ENCODE measurements at regions of chr12 and their contacts with region 1.

Region 1: GRCh38 chr12:13941258-13942249 is 39.8 kb downstream of the GRIN2B start:
- DNase-seq: peak; percentile 90
- H3K4me3 ChIP-seq: no peak overlapping the region
- H3K4me3 Mint-ChIP-seq: peak overlapping the region; percentile 23
- H3K27ac Mint-ChIP-seq: peak overlapping the region; percentile 23
- H3K4me1 ChIP-seq: peaks cover 32% of the 10 kb centered on the region
- H3K4me1 Mint-ChIP-seq: peaks cover 24% of the 10 kb centered on the region
- H3K27me3 ChIP-seq: no peaks in the 10 kb centered on the region
- H3K27me3 Mint-ChIP-seq: no peaks in the 10 kb centered on the region
- CTCF ChIP-seq: peak; percentile 65 to 91

Region 2: DNA sequence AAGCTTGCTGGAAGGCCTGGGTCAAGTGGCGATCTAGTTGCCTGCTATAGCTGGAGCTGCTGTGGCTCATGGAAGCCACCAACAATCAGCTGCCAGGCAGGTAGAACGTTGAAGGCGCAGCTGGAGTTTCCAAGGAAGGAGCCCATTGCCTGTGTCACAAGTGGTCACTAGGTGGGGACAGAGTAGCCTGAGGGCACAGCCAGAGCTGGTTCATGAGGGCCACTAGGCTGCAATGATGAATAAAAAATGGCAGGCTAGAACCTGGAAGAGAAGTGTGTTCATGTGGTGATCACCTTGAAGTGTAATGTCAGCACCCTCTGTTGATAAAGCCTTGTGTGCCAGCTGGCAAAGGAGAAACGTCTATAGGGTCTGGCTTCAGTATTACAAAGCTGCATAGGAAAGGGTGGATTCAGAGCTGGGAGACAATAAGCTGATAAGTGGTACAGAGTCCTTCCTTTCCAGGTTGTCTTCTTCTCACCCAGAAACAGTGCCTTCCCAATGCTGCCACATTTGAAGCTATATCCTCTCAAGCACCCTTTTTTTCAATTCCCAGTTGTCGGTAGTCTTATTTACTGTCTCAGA is 579.2 kb before region 1 on chr12:
- CTCF ChIA-PET with region 1: interaction called, 6 read pairs
- POLR2A ChIA-PET with region 1: no interaction called
- intact Hi-C with region 1: loop called (anchors 5 kb)
- DNase-seq: peak; percentile 85 to 88
- H3K4me3 ChIP-seq: no peak overlapping the region
- H3K4me3 Mint-ChIP-seq: no peak overlapping the region
- H3K27ac Mint-ChIP-seq: no peak overlapping the region
- H3K4me1 ChIP-seq: no peaks in the 10 kb centered on the region
- H3K4me1 Mint-ChIP-seq: no peaks in the 10 kb centered on the region
- H3K27me3 ChIP-seq: no peaks in the 10 kb centered on the region
- H3K27me3 Mint-ChIP-seq: peaks cover 20% of the 10 kb centered on the region
- CTCF ChIP-seq: peak; percentile 93 to 96

Region 3: DNA sequence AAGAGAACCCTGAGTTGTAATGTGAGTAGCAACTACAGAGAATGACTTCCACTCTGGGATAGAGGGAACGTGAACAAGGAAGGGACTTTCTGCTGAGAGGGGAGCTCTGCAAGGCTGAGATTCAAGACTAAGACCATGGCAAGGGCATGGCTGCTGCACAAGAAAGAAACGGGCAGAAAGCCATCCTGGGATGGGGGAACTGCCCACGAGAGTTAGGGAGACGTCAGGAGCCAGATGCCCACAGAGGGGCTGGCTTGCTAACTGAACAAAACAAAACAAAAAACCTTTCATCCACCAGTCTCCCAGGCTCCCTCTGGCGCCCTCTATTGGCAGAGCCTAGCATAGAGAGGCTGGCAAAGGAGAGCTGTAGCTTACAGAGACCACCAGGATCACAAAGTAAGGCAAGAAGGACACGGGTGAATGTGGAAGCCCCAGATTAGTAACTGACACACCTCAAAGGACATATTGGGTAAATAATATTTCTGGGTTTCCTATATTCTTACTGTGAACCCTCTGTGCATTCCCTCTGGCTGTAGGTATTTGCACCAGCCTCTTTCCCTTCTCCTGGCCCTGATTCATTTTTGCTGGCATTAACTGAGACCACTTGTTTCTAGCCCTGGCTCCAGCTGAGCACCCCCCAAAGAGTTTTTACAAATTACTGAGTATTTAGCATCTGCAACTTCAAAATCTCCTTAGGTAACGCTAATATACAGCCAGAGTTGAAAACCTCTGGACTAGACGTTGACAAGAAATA is 406.7 kb before region 1 on chr12:
- CTCF ChIA-PET with region 1: interaction called, 3 read pairs
- POLR2A ChIA-PET with region 1: no interaction called
- intact Hi-C with region 1: loop called (anchors 10 kb)
- DNase-seq: peak; percentile 82 to 88
- H3K4me3 ChIP-seq: no peak overlapping the region
- H3K4me3 Mint-ChIP-seq: no peak overlapping the region
- H3K27ac Mint-ChIP-seq: no peak overlapping the region
- H3K4me1 ChIP-seq: no peaks in the 10 kb centered on the region; the same call in 1 of the 2 replicates
- H3K4me1 Mint-ChIP-seq: no peaks in the 10 kb centered on the region
- H3K27me3 ChIP-seq: no peaks in the 10 kb centered on the region
- H3K27me3 Mint-ChIP-seq: peaks cover under 1% of the 10 kb centered on the region
- CTCF ChIP-seq: peak; percentile 96

Region 4: GRCh38 chr12:13784504-13784903 is 157.1 kb before region 1 on chr12:
- CTCF ChIA-PET with region 1: no interaction called
- POLR2A ChIA-PET with region 1: no interaction called
- intact Hi-C with region 1: loop called (anchors 5 kb)
- DNase-seq: no peak
- H3K4me3 ChIP-seq: no peak overlapping the region
- H3K4me3 Mint-ChIP-seq: no peak overlapping the region
- H3K27ac Mint-ChIP-seq: peak overlapping the region; percentile 43
- H3K4me1 ChIP-seq: peaks cover 31% of the 10 kb centered on the region
- H3K4me1 Mint-ChIP-seq: peaks cover 43% of the 10 kb centered on the region
- H3K27me3 ChIP-seq: no peaks in the 10 kb centered on the region
- H3K27me3 Mint-ChIP-seq: no peaks in the 10 kb centered on the region
- CTCF ChIP-seq: no peak

Region 5: GRCh38 chr12:13864081-13864673 is 77.4 kb before region 1 on chr12:
- CTCF ChIA-PET with region 1: interaction called, 44 read pairs
- POLR2A ChIA-PET with region 1: no interaction called
- intact Hi-C with region 1: loop called (anchors 1 kb)
- DNase-seq: peak; percentile 84 to 87
- H3K4me3 ChIP-seq: no peak overlapping the region
- H3K4me3 Mint-ChIP-seq: no peak overlapping the region
- H3K27ac Mint-ChIP-seq: no peak overlapping the region
- H3K4me1 ChIP-seq: peaks cover 23% of the 10 kb centered on the region
- H3K4me1 Mint-ChIP-seq: peaks cover 35% of the 10 kb centered on the region
- H3K27me3 ChIP-seq: no peaks in the 10 kb centered on the region
- H3K27me3 Mint-ChIP-seq: no peaks in the 10 kb centered on the region
- CTCF ChIP-seq: peak; percentile 98 to 99

Region 6: GRCh38 chr12:13875744-13876143 is 65.8 kb before region 1 on chr12:
- CTCF ChIA-PET with region 1: no interaction called
- POLR2A ChIA-PET with region 1: no interaction called
- intact Hi-C with region 1: no loop called
- DNase-seq: no peak
- H3K4me3 ChIP-seq: no peak overlapping the region
- H3K4me3 Mint-ChIP-seq: no peak overlapping the region
- H3K27ac Mint-ChIP-seq: no peak overlapping the region
- H3K4me1 ChIP-seq: no peaks in the 10 kb centered on the region
- H3K4me1 Mint-ChIP-seq: peaks cover 2% of the 10 kb centered on the region
- H3K27me3 ChIP-seq: no peaks in the 10 kb centered on the region
- H3K27me3 Mint-ChIP-seq: no peaks in the 10 kb centered on the region
- CTCF ChIP-seq: no peak

Region 7: GRCh38 chr12:13913371-13913770 is 28.2 kb before region 1 on chr12:
- CTCF ChIA-PET with region 1: no interaction called
- POLR2A ChIA-PET with region 1: no interaction called
- intact Hi-C with region 1: no loop called
- DNase-seq: no peak
- H3K4me3 ChIP-seq: no peak overlapping the region
- H3K4me3 Mint-ChIP-seq: no peak overlapping the region
- H3K27ac Mint-ChIP-seq: no peak overlapping the region
- H3K4me1 ChIP-seq: peaks cover 20% of the 10 kb centered on the region
- H3K4me1 Mint-ChIP-seq: peaks cover 42% of the 10 kb centered on the region
- H3K27me3 ChIP-seq: no peaks in the 10 kb centered on the region
- H3K27me3 Mint-ChIP-seq: no peaks in the 10 kb centered on the region
- CTCF ChIP-seq: no peak

Region 8: GRCh38 chr12:13962699-13963098 is 21.1 kb after region 1 on chr12:
- CTCF ChIA-PET with region 1: no interaction called
- POLR2A ChIA-PET with region 1: no interaction called
- intact Hi-C with region 1: loop called (anchors 1 kb)
- DNase-seq: peak; percentile 59 to 65
- H3K4me3 ChIP-seq: no peak overlapping the region
- H3K4me3 Mint-ChIP-seq: no peak overlapping the region
- H3K27ac Mint-ChIP-seq: no peak overlapping the region
- H3K4me1 ChIP-seq: no peaks in the 10 kb centered on the region
- H3K4me1 Mint-ChIP-seq: peaks cover 19% of the 10 kb centered on the region
- H3K27me3 ChIP-seq: no peaks in the 10 kb centered on the region
- H3K27me3 Mint-ChIP-seq: no peaks in the 10 kb centered on the region
- CTCF ChIP-seq: peak; percentile 70 to 85

Region 9: DNA sequence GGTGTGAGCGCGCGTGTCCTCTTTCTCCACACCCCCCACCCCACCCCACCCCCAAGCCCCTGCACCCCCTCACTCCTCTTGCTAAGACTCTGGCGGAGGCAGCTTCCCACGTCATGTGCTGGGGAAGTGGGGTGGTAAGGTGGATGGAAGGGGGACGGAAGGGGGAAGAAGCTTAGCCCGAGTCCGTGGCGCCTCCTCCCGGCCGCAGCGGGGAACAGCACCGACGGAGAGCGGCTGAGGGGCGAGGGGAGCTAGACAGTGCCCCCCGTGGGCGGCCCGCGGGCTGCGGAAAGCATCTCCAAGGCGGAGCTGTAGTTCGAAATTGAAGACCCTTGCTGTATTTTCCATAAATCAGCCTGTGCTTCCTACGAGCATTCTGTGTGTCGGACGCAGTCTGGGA is 40.4 kb after region 1 on chr12:
- CTCF ChIA-PET with region 1: interaction called, 26 read pairs
- POLR2A ChIA-PET with region 1: no interaction called
- intact Hi-C with region 1: loop called (anchors 1 kb)
- DNase-seq: peak; percentile 79 to 92
- H3K4me3 ChIP-seq: peak overlapping the region; percentile 91
- H3K4me3 Mint-ChIP-seq: peak overlapping the region; percentile 98
- H3K27ac Mint-ChIP-seq: no peak overlapping the region
- H3K4me1 ChIP-seq: no peaks in the 10 kb centered on the region
- H3K4me1 Mint-ChIP-seq: peaks cover 11% of the 10 kb centered on the region
- H3K27me3 ChIP-seq: no peaks in the 10 kb centered on the region
- H3K27me3 Mint-ChIP-seq: no peaks in the 10 kb centered on the region
- CTCF ChIP-seq: peak; percentile 98

Measured in Caco-2 (cell line).